Testis (tissue), 5 donors: ENCODE measurements at regions of chr17 and their contacts with region 1.

Region 1: DNA sequence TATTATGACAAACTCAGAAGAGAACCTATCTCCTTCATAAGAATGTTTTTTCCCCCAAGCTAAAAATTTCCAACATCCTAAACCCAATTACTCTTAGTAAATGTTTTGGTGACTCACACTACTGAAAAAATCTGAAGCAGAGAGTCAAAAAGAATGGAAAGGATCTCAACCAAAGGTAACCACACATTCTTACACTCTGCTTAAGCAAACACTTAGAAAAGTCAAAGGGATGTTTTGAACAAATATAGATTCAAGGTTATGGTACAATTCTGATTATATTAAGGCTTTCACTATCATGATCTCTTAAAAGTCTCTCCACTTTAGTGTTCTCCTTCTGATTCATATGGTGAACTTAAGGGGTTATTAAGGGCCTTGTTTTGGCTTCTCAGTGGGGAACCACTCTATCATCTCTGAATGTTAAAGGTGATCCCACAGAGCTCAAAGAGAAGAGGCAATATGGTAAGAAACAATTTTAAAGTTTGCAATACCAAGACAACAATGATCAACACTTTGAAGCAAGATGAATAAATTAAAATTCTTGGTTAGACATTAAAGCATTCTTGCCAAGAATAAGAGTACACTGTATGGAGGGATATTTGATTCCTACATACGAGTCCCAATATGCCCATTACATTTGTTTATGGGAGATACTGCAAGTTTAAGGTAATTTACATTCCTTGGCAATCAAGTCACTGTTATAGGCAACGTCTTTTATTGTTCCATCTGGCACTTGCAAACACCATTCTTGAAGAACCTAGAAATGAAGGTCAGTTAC is 69.2 kb downstream of the CDC27 start:
- DNase-seq: no peak
- H3K4me3 ChIP-seq: no peak overlapping the region
- H3K27ac ChIP-seq: no peak overlapping the region
- H3K4me1 ChIP-seq: no peaks in the 10 kb centered on the region
- H3K27me3 ChIP-seq: no peaks in the 10 kb centered on the region
- CTCF ChIP-seq: no peak
- POLR2A ChIP-seq: no peak

Region 2: DNA sequence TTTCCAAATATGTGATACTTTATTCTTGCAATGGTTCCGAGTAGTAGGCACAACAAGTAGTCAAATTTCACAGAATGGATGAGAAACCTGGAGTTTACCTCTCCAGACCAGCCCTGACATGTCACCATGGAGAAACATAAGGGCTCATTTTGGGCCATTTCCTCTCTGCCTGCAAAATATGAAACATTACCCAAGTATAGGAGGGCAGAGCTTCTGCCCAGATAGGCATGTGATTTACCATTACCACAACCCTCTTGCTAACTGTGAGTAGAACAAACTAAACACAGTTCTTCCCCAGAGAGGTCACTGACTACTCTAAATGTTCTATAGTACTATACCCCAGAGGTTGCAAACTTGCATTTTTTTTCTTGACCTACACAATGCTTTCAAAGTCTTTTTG is 514.1 kb after region 1 on chr17:
- intact Hi-C with region 1: loop called (anchors 5 kb)
- DNase-seq: no peak
- H3K4me3 ChIP-seq: no peak overlapping the region
- H3K27ac ChIP-seq: no peak overlapping the region
- H3K4me1 ChIP-seq: no peaks in the 10 kb centered on the region
- H3K27me3 ChIP-seq: no peaks in the 10 kb centered on the region
- CTCF ChIP-seq: no peak
- POLR2A ChIP-seq: no peak